Activated CD4-positive, alpha-beta T cell treated with anti-CD3 and anti-CD28 coated beads for 36 hours (primary cell): ENCODE measurements at regions of chr7 and their contacts with region 1.

Region 1: DNA sequence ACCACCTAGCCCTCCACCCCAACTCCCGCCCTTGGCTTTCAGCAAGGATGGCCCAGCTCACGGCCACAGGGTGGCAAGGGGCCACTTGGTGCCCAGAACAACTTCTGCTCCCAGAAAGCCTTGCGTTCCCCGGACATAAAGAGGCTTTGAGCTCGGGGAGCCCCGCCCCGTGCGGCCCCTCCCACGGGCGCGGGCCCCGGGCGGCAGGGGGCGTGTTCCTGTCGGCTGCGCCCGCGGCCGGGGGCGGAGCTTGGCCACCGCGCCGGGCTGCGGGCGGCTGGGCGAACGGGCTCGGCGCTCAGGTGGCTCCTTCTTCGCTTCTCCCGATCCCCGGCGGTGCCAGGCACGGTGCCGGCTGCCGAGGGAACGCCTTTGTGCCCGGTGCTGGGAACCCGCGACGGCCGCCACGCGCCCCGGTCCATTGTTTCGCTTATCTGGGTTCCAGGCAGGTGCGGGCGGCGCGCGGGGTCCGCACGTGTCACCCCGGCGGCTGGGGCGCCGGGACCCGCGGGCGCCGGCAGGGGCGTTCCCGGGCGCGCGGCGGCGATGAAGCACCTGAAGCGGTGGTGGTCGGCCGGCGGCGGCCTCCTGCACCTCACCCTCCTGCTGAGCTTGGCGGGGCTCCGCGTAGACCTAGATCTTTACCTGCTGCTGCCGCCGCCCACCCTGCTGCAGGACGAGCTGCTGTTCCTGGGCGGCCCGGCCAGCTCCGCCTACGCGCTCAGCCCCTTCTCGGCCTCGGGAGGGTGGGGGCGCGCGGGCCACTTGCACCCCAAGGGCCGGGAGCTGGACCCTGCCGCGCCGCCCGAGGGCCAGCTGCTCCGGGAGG is at the start of gene NFE2L3:
- DNase-seq: peak; percentile 91
- ATAC-seq: peak; percentile 68
- H3K4me3 Mint-ChIP-seq: peak within 1 kb of the TSS; percentile 93
- H3K27ac Mint-ChIP-seq: peak within 1 kb of the TSS; percentile 97
- H3K4me1 Mint-ChIP-seq: peaks cover 52% of the 10 kb centered on the region
- H3K27me3 Mint-ChIP-seq: no peaks in the 10 kb centered on the region
- total RNA-seq, gene NFE2L3: 19.9 to 23.8 TPM

Region 2: DNA sequence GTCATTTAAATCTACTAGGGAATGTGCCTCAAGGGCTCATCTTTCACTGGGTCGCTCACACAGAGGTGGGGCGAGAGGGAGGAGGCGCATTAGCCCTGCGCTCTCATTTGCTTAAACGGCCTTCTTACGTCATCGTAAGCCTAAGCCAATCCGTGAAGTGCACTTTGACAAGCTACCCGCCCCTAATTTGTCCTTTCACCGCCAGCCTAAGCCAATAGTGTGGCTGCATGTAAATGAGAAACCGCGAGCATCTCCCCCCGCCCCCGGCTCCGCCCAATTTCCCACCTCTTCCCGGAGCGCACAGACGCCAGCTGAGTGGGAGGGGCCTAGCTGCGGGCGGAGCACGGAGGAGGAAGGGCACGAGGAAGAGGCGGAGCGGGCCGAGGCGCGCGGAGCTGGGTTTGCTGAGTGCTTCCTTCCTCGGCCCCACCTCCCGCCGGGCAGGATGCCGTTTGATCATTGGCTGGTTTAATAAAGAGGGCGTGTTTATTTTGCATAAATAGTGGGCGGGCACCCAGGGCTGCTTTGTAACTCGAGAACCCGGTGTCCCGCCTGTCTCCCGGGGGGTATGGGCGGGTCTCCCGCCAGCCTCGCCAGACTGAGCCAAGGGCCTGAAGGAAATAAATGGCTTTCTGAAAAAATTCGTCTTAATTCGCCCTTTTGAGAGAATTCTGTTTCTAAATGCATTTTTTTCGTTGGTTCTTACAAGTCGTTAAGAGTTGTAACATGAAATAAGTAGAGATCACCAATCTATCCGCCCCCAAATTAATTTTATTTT is 289.7 kb before region 1 on chr7:
- CTCF ChIA-PET with region 1: no interaction called
- POLR2A ChIA-PET with region 1: no interaction called
- intact Hi-C with region 1: loop called in 1 of 2 experiments (anchors 1 kb)
- DNase-seq: peak; percentile 99
- ATAC-seq: peak; percentile 94
- H3K4me3 Mint-ChIP-seq: peak overlapping the region; percentile 68
- H3K27ac Mint-ChIP-seq: peak overlapping the region; percentile 69
- H3K4me1 Mint-ChIP-seq: peaks cover 26% of the 10 kb centered on the region
- H3K27me3 Mint-ChIP-seq: peaks cover 46% of the 10 kb centered on the region

Region 3: DNA sequence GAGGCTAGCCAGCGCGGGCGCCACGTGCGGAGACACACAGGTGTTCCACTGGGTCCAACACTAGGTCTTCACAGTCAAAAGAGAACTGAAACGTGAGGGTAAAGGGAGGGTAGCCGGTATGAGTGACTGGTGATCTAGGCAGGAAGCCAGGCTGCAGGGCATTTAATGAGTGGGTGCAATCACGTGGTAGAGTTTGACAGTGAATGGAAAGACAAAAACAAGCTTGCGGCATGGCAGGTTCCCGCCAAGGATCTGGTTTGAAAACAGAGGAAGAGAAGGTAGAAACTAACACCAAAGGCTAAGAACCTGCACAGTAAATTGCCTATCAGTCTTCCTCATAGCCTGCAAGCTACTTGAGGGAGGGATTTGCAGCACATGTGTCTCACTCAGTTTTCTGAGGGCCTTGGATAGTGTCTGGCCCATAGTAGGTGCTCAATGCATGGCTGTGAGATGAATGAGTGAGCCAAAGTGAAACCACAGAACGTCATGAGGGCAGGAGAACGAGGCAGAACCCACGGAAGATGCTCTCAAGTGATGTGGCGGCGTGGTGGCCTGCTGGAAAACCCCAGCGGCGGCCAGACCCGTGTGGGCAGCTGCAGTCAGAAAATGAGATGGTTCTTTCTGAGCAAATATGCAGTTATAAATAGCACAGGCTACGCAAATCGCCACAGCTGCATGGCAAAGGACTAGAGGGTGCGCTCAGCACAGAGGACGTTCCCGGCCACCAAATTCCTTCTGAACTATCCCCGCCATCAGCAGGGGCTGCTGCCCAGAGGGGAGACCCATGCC is 183.8 kb before region 1 on chr7:
- CTCF ChIA-PET with region 1: no interaction called
- POLR2A ChIA-PET with region 1: no interaction called
- intact Hi-C with region 1: loop called in 1 of 2 experiments (anchors 5 kb)
- DNase-seq: peak; percentile 75
- ATAC-seq: peak; percentile 86
- H3K4me3 Mint-ChIP-seq: no peak overlapping the region
- H3K27ac Mint-ChIP-seq: peak overlapping the region; percentile 35
- H3K4me1 Mint-ChIP-seq: peaks cover 18% of the 10 kb centered on the region
- H3K27me3 Mint-ChIP-seq: peaks cover 22% of the 10 kb centered on the region

Region 4: DNA sequence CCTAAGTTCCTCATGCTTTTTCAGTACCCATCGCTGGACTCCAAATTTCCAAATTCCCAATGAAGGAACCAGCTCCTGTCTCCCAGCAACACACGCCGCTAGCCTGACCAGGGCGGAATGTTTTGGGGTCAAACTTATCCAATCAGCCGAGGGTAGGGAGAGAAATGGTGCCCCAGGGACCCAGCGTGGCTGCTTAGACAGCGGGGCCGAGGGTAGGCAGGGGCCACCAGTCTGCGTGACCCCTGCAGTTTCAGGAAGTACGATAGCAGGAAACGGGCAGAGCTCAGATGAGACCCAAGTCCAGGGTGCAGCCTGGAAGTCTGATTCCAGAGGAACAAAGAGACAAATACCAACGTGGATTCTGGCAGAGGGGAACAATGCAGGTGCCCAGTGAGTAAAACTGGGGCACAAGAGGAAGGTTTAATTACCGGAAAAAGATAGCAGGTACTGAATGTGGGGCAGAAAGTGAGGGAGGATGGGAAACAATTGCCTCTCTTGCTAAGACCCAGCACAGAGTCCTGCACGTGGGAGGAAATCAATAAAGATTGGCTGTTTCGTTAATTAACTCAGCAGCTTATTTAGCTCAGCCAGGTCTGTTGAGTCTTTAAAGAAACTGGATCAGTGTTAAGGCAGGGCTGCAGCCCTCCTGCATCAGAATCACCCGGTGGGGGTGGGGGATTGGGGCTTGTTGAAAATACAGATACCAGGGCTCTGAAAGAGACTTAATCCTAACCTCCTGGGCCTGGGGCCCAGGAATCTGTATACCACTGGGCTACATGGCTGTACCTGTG is 50.6 kb before region 1 on chr7:
- CTCF ChIA-PET with region 1: interaction called, 3 read pairs
- POLR2A ChIA-PET with region 1: interaction called, 3 read pairs
- intact Hi-C with region 1: loop called (anchors 1 kb)
- DNase-seq: peak; percentile 31
- ATAC-seq: peak; percentile 4
- H3K4me3 Mint-ChIP-seq: peak overlapping the region; percentile 64
- H3K27ac Mint-ChIP-seq: peak overlapping the region; percentile 88
- H3K4me1 Mint-ChIP-seq: peaks cover 47% of the 10 kb centered on the region
- H3K27me3 Mint-ChIP-seq: no peaks in the 10 kb centered on the region

Region 5: GRCh38 chr7:26187380-26188205 is 35.4 kb after region 1 on chr7:
- CTCF ChIA-PET with region 1: interaction called, 6 read pairs
- POLR2A ChIA-PET with region 1: interaction called, 28 read pairs
- intact Hi-C with region 1: loop called (anchors 1 kb)
- DNase-seq: no peak
- ATAC-seq: peak; percentile 21
- H3K4me3 Mint-ChIP-seq: peak overlapping the region; percentile 14
- H3K27ac Mint-ChIP-seq: peak overlapping the region; percentile 77
- H3K4me1 Mint-ChIP-seq: peaks cover 68% of the 10 kb centered on the region
- H3K27me3 Mint-ChIP-seq: no peaks in the 10 kb centered on the region

Region 6: DNA sequence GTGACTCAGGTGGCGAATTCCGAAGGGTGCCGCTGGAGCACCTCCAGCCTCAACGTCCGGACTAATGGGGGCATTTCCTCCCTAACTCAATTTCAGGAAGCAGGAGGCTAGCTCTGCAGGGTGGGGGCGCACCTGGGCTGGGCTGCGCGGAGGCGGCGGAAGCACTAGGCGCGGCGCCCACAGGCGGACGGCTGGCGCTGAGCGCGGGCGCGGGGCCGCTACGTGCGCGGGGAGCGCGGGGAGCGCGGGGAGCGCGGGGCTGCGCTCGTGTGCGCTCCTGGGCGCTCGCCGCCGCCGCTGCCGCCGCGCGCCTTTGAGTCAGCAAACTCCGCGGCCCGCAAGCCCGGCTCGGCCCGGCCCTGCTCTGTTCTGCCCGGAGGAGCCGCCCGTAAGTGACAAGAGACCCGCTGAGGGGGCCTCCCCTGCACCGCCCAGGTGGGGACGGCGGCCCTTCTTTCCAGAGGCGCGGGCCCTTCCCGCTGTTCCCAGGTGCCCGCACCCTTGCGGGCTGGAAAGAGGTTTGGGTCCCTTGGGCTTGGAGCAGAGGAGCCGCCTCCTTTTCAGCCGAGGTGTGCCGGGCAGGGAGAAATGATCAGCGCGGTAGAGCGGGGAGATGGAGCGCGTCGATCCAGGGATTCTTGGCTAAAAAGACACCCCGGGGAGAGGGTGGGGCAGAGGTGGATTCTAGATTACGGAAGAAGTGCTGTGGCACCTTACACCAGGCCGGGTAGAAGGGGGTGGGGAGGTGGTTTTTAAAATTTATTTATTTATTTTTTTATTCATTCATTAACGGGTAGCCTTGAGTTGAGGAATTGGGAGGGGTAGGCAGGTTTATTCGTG is 139.8 kb after region 1 on chr7 and contains the start of gene SNX10:
- CTCF ChIA-PET with region 1: no interaction called
- POLR2A ChIA-PET with region 1: interaction called, 5 read pairs
- intact Hi-C with region 1: loop called (anchors 1 kb)
- DNase-seq: peak; percentile 81
- ATAC-seq: peak; percentile 68
- H3K4me3 Mint-ChIP-seq: peak within 1 kb of the TSS; percentile 85
- H3K27ac Mint-ChIP-seq: peak within 1 kb of the TSS; percentile 84
- H3K4me1 Mint-ChIP-seq: peaks cover 33% of the 10 kb centered on the region
- H3K27me3 Mint-ChIP-seq: no peaks in the 10 kb centered on the region
- total RNA-seq, gene SNX10: 28.1 to 35.5 TPM

Region 7: GRCh38 chr7:27108390-27109127 is 956.4 kb after region 1 on chr7:
- CTCF ChIA-PET with region 1: no interaction called
- POLR2A ChIA-PET with region 1: no interaction called
- intact Hi-C with region 1: no loop called
- DNase-seq: no peak
- ATAC-seq: no peak
- H3K4me3 Mint-ChIP-seq: no peak overlapping the region
- H3K27ac Mint-ChIP-seq: no peak overlapping the region
- H3K4me1 Mint-ChIP-seq: peaks cover 4% of the 10 kb centered on the region
- H3K27me3 Mint-ChIP-seq: peaks cover 31% of the 10 kb centered on the region